Endothelial cell of umbilical vein (primary cell): ENCODE measurements at regions of chr1 and their contacts with region 1.

Region 1: GRCh38 chr1:228457396-228458176 is 29.6 kb upstream of the RNF187 start:
- DNase-seq: peak; percentile 99
- H3K4me3 ChIP-seq: peak overlapping the region; percentile 36 to 71 (median 46)
- H3K27ac ChIP-seq: peak overlapping the region; percentile 36
- H3K4me1 ChIP-seq: peaks cover 18% of the 10 kb centered on the region
- H3K27me3 ChIP-seq: peaks cover 7 to 13% of the 10 kb centered on the region in 2 experiments
- CTCF ChIP-seq: peak; percentile 3 to 42
- POLR2A ChIP-seq: peak; percentile 95

Region 2: GRCh38 chr1:228087771-228088251 is 369.8 kb before region 1 on chr1:
- CTCF ChIA-PET with region 1: no interaction called
- POLR2A ChIA-PET with region 1: no interaction called
- dilution Hi-C with region 1: no loop called
- intact Hi-C with region 1: loop called (anchors 5 kb)
- DNase-seq: peak; percentile 94
- H3K4me3 ChIP-seq: peak overlapping the region in 1 of 3 experiments; percentile 10
- H3K27ac ChIP-seq: peak overlapping the region; percentile 94
- H3K4me1 ChIP-seq: peaks cover 79% of the 10 kb centered on the region
- H3K27me3 ChIP-seq: no peaks in the 10 kb centered on the region
- CTCF ChIP-seq: no peak
- POLR2A ChIP-seq: no peak

Region 3: DNA sequence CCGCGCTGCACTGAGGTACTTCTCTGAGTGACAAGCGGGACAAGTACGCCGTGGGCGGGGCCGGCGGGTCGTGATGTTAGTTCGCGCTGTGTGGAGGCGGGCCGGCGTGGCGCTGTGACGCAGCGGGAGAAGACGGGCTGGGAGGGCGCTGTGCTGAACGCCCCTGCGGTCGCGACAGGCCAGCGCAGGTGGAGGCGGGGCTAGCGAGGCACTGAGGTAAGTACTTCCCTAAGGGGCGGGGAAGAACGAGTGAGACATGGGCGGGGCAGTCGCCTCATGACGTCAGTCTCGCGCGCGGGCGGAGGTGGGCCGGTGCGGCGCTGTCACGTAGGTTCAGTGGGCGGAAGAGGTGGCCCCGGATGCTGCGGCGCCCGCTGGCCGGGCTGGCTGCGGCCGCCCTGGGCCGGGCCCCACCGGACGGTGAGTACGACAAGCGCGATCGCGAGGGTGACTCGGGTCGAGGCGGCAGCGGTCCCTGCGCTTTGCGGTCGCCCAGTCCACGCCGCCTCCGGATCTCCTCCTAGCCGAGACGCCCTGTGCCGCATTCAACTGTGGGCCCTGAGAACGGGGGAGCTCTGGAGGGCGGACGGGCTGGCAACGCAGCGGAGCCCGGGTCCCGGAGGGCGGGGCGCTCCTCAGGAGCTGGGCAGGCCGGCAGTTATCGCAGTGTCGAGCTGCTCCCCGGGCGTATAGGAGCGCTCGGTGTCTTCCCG is 317.5 kb before region 1 on chr1 and contains the start of gene GUK1:
- CTCF ChIA-PET with region 1: no interaction called
- POLR2A ChIA-PET with region 1: no interaction called
- dilution Hi-C with region 1: no loop called
- intact Hi-C with region 1: loop called (anchors 2 kb)
- DNase-seq: peak; percentile 100
- H3K4me3 ChIP-seq: peak within 1 kb of the TSS; percentile 53 to 77 (median 65)
- H3K27ac ChIP-seq: peak within 1 kb of the TSS; percentile 82
- H3K4me1 ChIP-seq: peaks cover 18% of the 10 kb centered on the region
- H3K27me3 ChIP-seq: peaks cover 15 to 21% of the 10 kb centered on the region in 2 experiments
- CTCF ChIP-seq: peak in 1 of 2 donors; percentile 43
- POLR2A ChIP-seq: peak; percentile 95
- total RNA-seq, gene GUK1: 237 and 239 TPM in 2 replicates

Region 4: DNA sequence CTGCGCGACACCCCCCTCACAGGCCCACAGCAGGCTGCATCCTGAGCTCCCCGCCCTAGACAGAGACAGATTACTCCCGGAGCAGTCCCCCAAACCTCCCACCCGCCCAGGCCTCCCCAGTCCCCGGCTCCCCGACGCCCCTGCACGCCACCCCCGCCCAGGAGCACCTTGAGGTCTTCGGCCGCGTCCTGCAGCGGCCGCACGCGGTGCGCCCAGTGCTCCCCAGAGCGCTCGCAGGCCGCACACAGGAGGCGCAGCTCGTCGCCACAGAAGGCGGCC is 51.7 kb before region 1 on chr1:
- CTCF ChIA-PET with region 1: interaction called, 4 read pairs
- POLR2A ChIA-PET with region 1: no interaction called
- dilution Hi-C with region 1: no loop called
- intact Hi-C with region 1: loop called (anchors 1 kb)
- DNase-seq: no peak
- H3K4me3 ChIP-seq: peak overlapping the region; percentile 70 to 96 (median 73)
- H3K27ac ChIP-seq: no peak overlapping the region
- H3K4me1 ChIP-seq: peaks cover 23% of the 10 kb centered on the region
- H3K27me3 ChIP-seq: no peaks in the 10 kb centered on the region
- CTCF ChIP-seq: no peak
- POLR2A ChIP-seq: no peak

Region 5: DNA sequence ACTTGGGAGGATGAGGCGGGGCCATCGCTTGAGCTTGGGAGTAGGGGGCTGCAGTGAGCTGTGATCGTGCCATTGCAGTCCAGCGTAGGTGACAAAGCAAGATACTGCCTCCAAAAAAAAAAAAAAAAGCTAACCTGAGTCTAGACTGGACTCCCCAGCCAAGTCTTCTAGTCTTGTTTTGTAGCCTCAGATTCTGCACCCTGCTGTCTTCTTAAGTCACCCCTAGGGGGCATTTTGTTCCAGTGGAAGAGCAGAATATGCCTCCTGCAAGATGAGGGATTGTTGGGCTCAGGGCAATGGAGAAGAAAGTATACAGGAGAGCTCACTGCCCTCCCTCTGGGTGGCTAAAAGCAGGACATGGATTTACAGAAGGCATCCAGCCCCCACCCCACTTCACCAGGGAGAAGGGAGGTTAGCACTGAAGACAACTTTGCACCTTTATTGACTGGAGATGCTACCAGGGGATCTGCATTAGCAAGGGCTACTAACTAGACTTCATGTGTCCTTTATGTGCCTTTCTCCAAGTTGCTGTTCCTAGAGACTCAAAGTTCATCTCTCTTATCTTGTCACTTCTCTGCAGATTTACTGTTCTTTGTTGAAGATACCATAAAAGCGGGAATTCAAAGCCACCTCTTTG is 14.3 kb after region 1 on chr1:
- CTCF ChIA-PET with region 1: interaction called, 21 read pairs
- POLR2A ChIA-PET with region 1: no interaction called
- dilution Hi-C with region 1: no loop called
- intact Hi-C with region 1: no loop called
- DNase-seq: peak; percentile 34
- H3K4me3 ChIP-seq: no peak overlapping the region
- H3K27ac ChIP-seq: no peak overlapping the region
- H3K4me1 ChIP-seq: peaks cover 15% of the 10 kb centered on the region
- H3K27me3 ChIP-seq: peaks cover 28 to 33% of the 10 kb centered on the region in 2 experiments
- CTCF ChIP-seq: peak; percentile 38 to 55
- POLR2A ChIP-seq: no peak

Region 6: GRCh38 chr1:228515200-228515834 is 57.7 kb after region 1 on chr1:
- CTCF ChIA-PET with region 1: interaction called, 12 read pairs
- POLR2A ChIA-PET with region 1: no interaction called
- dilution Hi-C with region 1: no loop called
- intact Hi-C with region 1: no loop called
- DNase-seq: peak; percentile 60
- H3K4me3 ChIP-seq: no peak overlapping the region
- H3K27ac ChIP-seq: no peak overlapping the region
- H3K4me1 ChIP-seq: no peaks in the 10 kb centered on the region
- H3K27me3 ChIP-seq: peaks cover 21 to 22% of the 10 kb centered on the region in 2 experiments
- CTCF ChIP-seq: peak; percentile 56 to 58
- POLR2A ChIP-seq: no peak